Activated CD4-positive, alpha-beta memory T cell treated with anti-CD3 and anti-CD28 coated beads, Interleukin-2, amount 10 ng/mL, durations not matched to agents 7 days and 5 days (primary cell): ENCODE measurements at regions of chr2 and their contacts with region 1.

Region 1: GRCh38 chr2:160252278-160252887 is 52.3 kb upstream of the ITGB6 start:
- DNase-seq: no peak
- H3K4me3 Mint-ChIP-seq: no peak overlapping the region
- H3K27ac Mint-ChIP-seq: no peak overlapping the region
- H3K4me1 Mint-ChIP-seq: no peaks in the 10 kb centered on the region
- H3K27me3 Mint-ChIP-seq: peaks cover 8% of the 10 kb centered on the region

Region 2: DNA sequence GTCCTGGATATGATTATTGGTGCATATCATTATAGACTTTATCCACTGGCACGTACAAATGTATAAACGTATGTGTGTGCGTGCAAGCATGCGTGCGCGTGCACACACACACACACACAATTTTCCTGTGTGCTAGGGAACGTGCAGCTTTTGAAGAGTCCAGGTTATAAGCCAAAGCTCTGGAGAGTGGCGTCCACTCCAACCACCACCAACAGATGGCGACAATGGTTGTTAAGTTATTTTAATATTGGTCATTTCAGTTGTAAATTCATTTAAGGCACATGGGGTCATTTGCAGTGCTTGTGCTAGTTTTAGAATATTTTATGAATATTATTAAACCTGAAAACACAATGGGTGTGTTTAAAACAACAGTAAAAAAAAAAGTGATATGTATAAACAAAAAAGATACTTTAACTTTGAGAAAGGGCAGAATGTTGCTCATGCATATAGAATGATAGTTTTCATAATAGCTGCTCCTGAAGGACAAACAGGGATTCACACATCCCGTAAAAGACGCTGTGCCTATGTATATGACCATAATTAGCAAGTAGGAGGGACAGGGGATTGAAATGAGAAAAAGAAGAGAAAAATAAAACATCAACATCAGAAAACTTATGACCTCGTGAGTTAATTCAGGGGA is 71.9 kb after region 1 on chr2:
- CTCF ChIA-PET with region 1: interaction called, 14 read pairs
- POLR2A ChIA-PET with region 1: no interaction called
- DNase-seq: peak; percentile 49
- H3K4me3 Mint-ChIP-seq: no peak overlapping the region
- H3K27ac Mint-ChIP-seq: no peak overlapping the region
- H3K4me1 Mint-ChIP-seq: peaks cover 50% of the 10 kb centered on the region
- H3K27me3 Mint-ChIP-seq: peaks cover 4% of the 10 kb centered on the region

Region 3: DNA sequence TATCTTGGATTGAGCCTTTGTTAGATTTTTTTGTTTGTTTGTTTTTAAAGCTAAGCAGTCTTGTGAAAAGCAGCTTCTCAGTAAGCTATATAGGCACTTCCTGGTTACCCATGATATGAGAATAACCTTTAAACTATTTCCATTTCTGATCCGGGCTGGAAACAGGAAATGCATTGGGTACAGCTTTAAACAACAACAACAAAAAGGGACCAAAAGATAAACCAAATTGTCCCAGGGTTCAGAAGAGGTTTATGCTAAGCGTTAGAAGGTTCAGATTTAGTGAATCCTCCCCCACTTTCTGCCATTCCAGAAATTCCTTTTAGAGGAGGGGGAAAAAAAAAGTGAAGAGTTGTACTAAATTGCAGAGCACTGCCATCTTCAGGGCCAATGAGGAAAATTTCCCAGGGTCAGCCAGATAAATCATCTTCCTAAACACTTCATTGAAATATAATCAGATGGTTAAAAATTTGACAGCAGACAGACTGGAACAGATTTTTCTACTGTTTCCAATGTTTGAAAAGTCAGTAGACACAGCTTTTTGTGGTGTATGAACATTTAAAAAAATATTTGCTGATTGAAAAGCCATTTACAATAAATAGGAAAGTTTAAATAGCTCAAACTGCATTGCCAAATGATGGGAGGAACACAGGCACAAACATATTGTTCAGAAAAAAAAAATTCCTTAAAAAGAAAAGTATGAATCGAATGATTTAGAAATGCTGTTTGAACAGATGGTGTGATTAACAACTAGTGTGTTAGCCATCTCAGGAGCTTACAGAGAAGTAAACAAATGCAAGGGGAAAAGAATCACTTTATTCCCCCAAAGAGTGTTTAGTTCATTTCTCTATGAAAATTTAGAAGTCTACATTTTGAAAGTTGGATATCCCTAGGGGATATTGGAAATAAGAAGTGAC is 717.9 kb after region 1 on chr2:
- CTCF ChIA-PET with region 1: interaction called, 10 read pairs
- POLR2A ChIA-PET with region 1: no interaction called
- DNase-seq: no peak
- H3K4me3 Mint-ChIP-seq: no peak overlapping the region
- H3K27ac Mint-ChIP-seq: no peak overlapping the region
- H3K4me1 Mint-ChIP-seq: no peaks in the 10 kb centered on the region
- H3K27me3 Mint-ChIP-seq: peaks cover 10% of the 10 kb centered on the region